ENCODE measurements at regions of chr6 and their contacts with region 1.

Region 1: GRCh38 chr6:121849477-121849876 is 414.0 kb downstream of the GJA1 start:
- DNase-seq: peak; percentile 44
- H3K4me3 ChIP-seq: no peak overlapping the region
- H3K27ac ChIP-seq: no peak overlapping the region
- H3K27me3 ChIP-seq: no peaks in the 10 kb centered on the region
- CTCF ChIP-seq: peak; percentile 88

Region 2: GRCh38 chr6:121020656-121021055 is 828.8 kb before region 1 on chr6:
- CTCF ChIA-PET with region 1: no interaction called
- POLR2A ChIA-PET with region 1: no interaction called
- DNase-seq: no peak
- H3K4me3 ChIP-seq: no peak overlapping the region
- H3K27ac ChIP-seq: no peak overlapping the region
- H3K27me3 ChIP-seq: no peaks in the 10 kb centered on the region
- CTCF ChIP-seq: no peak

Region 3: DNA sequence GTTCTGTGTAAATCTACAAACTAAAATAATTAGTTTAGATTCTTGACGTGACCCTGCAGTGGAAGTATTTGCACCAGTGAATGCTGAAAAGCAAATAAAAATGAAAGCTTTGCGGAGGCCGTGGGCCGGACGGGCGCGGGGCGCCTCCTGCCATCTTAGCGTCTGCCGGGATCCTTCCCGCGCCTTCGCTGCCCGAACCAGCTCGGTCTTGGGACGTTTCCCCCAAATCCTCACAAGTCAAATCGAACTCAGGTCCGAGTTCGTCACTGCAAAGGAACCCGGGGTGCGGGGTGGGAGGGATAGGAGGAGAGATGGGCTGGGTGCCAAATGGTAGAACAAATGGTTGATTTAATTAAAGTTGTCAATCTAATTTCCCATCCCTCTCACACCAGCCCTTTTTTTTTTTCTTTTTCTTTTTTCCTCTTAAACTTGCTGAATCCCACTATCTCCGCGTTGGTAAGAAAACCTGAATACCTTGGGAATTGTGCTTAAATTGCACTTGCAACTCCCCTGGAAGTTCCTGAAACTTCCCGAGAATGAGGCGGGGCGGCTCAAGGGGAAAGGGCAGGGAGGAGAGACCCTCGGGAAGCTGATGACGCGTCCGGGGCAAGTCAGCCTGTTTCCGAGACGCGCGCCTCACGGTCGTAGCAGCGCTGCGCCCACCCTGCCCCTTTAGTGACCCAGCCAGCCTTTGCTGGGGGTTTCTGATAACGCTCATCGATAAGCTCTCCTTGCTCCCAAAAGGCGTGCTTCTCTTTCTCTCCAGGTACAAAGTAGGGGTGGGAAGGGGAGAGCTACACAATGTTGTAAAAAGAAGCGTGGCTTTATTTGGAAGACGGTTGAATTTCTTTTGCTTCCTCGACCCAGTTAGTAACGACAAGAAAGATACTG is 412.3 kb before region 1 on chr6:
- CTCF ChIA-PET with region 1: interaction called, 101 read pairs
- POLR2A ChIA-PET with region 1: interaction called, 4 read pairs
- DNase-seq: peak; percentile 11
- H3K4me3 ChIP-seq: peak overlapping the region; percentile 87
- H3K27ac ChIP-seq: peak overlapping the region; percentile 83
- H3K27me3 ChIP-seq: no peaks in the 10 kb centered on the region
- CTCF ChIP-seq: no peak

Region 4: DNA sequence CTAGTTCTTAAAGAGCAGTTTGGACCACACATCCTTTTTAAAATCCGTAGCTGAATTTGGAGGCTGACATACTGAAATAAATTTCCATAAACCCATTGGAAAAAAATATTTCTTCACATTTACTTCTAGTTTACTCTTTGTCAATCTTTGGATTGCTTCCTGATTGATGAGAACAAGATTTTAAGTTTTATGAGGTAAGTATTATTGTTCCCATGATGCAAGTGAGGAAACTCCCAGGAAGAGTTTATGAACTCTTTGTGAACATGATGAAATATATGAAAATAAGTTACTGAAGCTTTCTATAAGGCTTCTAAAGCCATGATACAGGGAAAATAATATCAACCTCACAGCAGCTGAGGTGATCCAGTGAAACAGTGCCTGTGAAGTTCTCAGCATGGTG is 94.0 kb before region 1 on chr6:
- CTCF ChIA-PET with region 1: no interaction called
- POLR2A ChIA-PET with region 1: no interaction called
- DNase-seq: no peak
- H3K4me3 ChIP-seq: no peak overlapping the region
- H3K27ac ChIP-seq: no peak overlapping the region
- H3K27me3 ChIP-seq: no peaks in the 10 kb centered on the region
- CTCF ChIP-seq: no peak

Region 5: GRCh38 chr6:121838842-121839241 is 10.6 kb before region 1 on chr6:
- CTCF ChIA-PET with region 1: interaction called, 31 read pairs
- POLR2A ChIA-PET with region 1: no interaction called
- DNase-seq: no peak
- H3K4me3 ChIP-seq: no peak overlapping the region
- H3K27ac ChIP-seq: no peak overlapping the region
- H3K27me3 ChIP-seq: no peaks in the 10 kb centered on the region
- CTCF ChIP-seq: no peak

Region 6: GRCh38 chr6:122033539-122034181 is 184.2 kb after region 1 on chr6:
- CTCF ChIA-PET with region 1: interaction called, 10 read pairs
- POLR2A ChIA-PET with region 1: no interaction called
- DNase-seq: peak; percentile 32
- H3K4me3 ChIP-seq: no peak overlapping the region
- H3K27ac ChIP-seq: no peak overlapping the region
- H3K27me3 ChIP-seq: no peaks in the 10 kb centered on the region
- CTCF ChIP-seq: peak; percentile 69

Measured in AG04450 (cell line).